ENCODE measurements at regions of chr14 and their contacts with region 1.

Region 1: DNA sequence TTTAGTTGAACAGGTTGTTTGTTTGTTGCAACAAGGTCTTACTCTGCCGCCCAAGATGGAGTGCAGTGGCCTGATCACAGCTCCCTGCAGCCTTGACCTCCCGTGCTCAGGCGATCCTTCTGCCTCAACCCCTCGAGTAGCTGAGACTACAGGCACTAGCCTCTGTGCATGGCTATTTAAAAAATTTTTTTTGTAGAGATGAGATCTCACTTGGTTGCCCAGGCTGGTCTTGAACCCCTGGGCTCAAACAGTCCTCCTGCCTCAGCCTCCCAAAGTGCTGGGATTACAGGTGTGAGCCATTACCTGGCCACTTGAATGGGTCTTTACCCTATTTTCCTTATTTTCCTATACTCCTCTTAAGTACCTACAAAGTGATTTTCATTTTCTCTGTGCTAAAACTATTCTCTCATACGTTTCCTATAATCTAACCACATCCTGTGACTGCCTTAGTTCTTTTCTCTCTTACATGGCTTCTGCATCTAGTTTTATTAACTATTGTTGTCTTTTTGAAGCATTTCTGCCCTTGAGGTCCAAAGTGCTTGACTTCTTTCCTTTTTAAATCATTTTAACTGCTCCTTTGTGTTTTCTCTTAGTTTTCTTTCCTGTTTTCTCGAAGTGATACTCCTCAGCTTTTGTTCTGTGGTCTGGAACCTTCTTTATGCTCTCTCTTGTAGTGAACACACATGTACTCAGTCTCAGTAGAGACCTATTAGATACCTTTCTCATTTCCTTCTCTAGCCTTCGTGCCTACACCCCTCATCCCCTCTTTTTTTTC is 14.1 kb downstream of the GPX2 start:
- DNase-seq: no peak
- ATAC-seq: no peak
- H3K4me3 ChIP-seq: no peak overlapping the region
- H3K27ac ChIP-seq: peak overlapping the region; percentile 72
- H3K4me1 ChIP-seq: peaks cover 40% of the 10 kb centered on the region
- H3K27me3 ChIP-seq: no peaks in the 10 kb centered on the region
- CTCF ChIP-seq: no peak

Region 2: GRCh38 chr14:64817631-64818030 is 110.8 kb before region 1 on chr14:
- intact Hi-C with region 1: no loop called
- DNase-seq: no peak
- ATAC-seq: no peak
- H3K4me3 ChIP-seq: no peak overlapping the region
- H3K27ac ChIP-seq: peak overlapping the region; percentile 14
- H3K4me1 ChIP-seq: peaks cover 19% of the 10 kb centered on the region
- H3K27me3 ChIP-seq: no peaks in the 10 kb centered on the region
- CTCF ChIP-seq: no peak

Region 3: DNA sequence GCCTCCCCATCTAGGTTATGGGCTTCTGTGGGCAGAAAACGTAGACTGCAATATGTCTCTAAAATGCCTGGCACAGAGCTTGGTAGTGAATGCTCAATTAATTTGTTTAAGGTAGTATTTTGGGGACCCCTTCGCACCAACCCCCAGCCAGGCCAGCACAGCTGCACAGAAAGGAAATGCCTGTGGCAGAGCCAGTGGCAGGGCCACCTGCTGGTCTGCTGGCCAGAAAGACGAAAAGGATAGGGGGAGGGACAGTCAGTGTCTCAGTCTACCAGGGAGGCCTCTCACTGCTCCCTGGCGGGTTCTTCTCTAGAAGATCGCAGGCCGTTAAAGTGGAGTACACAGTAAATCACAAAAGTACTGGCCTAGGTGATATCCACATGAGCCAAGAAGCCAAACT is 40.2 kb after region 1 on chr14:
- intact Hi-C with region 1: loop called in 1 of 2 experiments (anchors 5 kb)
- DNase-seq: no peak
- ATAC-seq: peak in 3 of 4 donors; percentile 27 to 45 (median 30)
- H3K4me3 ChIP-seq: no peak overlapping the region
- H3K27ac ChIP-seq: peak overlapping the region; percentile 69
- H3K4me1 ChIP-seq: peaks cover 32% of the 10 kb centered on the region
- H3K27me3 ChIP-seq: no peaks in the 10 kb centered on the region
- CTCF ChIP-seq: no peak

Region 4: GRCh38 chr14:65084554-65085505 is 156.4 kb after region 1 on chr14:
- intact Hi-C with region 1: no loop called
- DNase-seq: no peak
- ATAC-seq: peak; percentile 55 to 83 (median 78)
- H3K4me3 ChIP-seq: peak overlapping the region; percentile 11
- H3K27ac ChIP-seq: peak overlapping the region; percentile 81
- H3K4me1 ChIP-seq: peaks cover 56% of the 10 kb centered on the region
- H3K27me3 ChIP-seq: no peaks in the 10 kb centered on the region
- CTCF ChIP-seq: no peak

Measured in psoas muscle (tissue), 8 donors.